GM10248 (cell line): ENCODE measurements at regions of chr16 and their contacts with region 1.

Region 1: GRCh38 chr16:30844671-30845449 is 49.0 kb downstream of the BCL7C start:
- DNase-seq: peak; percentile 90
- CTCF ChIP-seq: peak; percentile 85

Region 2: GRCh38 chr16:30813821-30814189 is 31.1 kb before region 1 on chr16:
- CTCF ChIA-PET with region 1: interaction called, 27 read pairs
- POLR2A ChIA-PET with region 1: no interaction called
- DNase-seq: no peak
- CTCF ChIP-seq: no peak

Region 3: GRCh38 chr16:30867747-30868146 is 22.9 kb after region 1 on chr16:
- CTCF ChIA-PET with region 1: interaction called, 18 read pairs
- POLR2A ChIA-PET with region 1: no interaction called
- DNase-seq: no peak
- CTCF ChIP-seq: no peak

Region 4: DNA sequence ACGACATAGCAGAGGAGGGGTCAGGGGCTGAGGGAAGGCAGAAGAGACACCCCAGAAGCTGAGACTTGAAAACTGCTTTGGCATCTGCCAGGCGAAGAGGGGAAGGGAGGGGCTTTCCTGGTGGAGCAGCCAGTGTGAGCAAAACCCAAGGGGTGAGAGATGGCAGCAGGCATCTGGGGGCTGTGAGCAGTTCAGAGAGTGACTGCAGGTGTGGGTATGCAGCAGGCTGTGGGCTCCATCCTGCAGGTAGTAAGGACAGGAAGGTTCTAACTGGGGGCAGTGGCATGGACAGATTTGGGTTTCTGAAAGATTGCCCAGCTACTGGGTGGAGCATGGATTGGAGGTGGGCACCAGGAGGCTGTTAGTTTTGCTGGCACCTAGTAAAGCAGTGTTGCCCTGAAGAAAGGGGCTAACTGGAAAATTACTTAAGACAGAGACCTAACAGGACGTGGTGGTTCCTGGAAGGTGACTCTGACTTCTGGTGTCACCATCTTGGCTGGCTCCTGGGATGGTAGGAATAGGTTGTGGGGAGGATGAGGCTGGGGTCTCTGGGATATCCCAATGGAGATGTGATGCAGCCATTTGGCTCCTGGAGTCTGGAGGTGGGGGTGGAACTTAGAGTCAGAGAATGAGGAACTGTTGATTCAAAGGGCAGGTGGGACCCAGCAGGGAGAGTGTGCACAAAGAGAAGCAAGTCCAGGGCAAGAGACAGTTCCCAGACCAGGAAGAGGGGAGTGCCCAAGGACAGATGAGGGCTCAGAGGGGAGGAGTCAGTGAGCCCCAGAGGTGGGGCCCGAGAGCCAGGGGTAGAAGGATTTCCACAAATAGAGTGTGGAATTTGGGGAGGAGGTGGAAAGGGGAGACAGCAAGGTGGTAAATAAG is 37.8 kb after region 1 on chr16:
- CTCF ChIA-PET with region 1: interaction called, 14 read pairs
- POLR2A ChIA-PET with region 1: no interaction called
- DNase-seq: no peak
- CTCF ChIP-seq: no peak

Region 5: GRCh38 chr16:30902029-30902972 is 57.4 kb after region 1 on chr16:
- CTCF ChIA-PET with region 1: interaction called, 73 read pairs
- POLR2A ChIA-PET with region 1: no interaction called
- DNase-seq: peak; percentile 85
- CTCF ChIP-seq: peak; percentile 85

Region 6: GRCh38 chr16:30922420-30922959 is 77.6 kb after region 1 on chr16:
- CTCF ChIA-PET with region 1: interaction called, 36 read pairs
- POLR2A ChIA-PET with region 1: no interaction called
- DNase-seq: peak; percentile 94
- CTCF ChIP-seq: no peak